ENCODE measurements at regions of chr11 and their contacts with region 1.

Region 1: DNA sequence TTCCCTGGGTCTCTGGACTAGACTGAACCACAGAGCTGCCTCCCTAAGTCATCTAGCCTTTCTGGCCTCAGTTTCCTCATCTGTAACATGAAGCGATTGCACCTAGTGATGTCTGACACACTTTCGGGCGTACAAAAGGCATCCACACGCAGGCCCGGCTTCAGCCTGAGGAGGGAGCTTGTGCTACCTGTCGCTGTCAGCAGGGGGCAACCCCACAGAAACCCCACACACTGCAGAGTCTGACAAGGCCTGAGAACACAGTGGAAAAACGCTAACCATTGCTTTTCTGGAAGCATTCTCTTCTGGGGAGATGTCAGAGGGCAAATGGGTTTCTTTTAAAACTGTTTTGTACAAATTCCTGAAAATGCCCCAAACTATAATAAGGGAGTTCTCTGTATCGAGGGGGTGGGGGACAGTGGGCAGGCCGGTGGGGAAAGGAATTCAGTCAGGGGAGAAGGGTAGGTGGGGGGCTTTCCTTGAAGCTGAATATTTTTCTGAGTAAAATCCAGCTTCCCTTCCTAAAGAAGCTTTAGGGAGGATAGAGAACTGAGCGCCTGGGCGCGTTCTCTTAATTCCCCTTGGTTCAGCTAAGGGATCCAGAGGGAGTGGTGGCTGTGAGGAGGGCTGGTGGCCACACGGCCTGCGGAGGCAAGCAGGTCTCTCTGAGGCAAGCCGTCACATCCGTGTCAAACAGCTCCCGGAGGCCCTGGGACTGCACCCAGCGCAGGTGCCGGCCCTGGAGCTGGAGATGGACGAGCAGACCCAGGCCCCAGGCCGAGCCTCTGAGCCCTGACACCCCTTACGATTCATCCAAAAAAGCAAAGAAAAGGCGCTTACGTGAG is 533 bp downstream of the ELF5 start:
- DNase-seq: peak; percentile 7
- ATAC-seq: peak; percentile 100
- H3K4me3 ChIP-seq: no peak overlapping the region
- H3K27ac ChIP-seq: no peak overlapping the region
- H3K4me1 ChIP-seq: no peaks in the 10 kb centered on the region
- H3K27me3 ChIP-seq: no peaks in the 10 kb centered on the region
- CTCF ChIP-seq: peak; percentile 75 to 93 (median 86)
- EP300 ChIP-seq: no peak
- POLR2A ChIP-seq: no peak
- RAD21 ChIP-seq: peak; percentile 60

Region 2: DNA sequence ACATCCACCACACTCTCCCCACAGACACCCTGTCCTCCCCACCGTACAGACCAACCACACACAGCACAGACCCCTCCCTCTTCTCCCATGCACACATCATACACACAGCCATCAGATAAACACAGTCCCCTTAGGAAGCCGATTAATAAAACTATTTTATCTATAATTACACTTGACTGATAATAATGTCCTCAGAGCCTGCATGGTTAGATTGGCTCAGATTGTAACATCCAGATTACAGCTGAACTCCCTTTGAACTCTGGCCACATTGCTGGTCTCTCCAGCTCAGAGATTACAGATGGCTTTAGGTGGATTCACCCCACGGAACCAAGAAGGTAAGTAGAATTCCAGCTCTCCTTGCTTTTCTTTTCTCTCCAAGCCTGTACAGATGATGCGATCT is 10.0 kb after region 1 on chr11:
- CTCF ChIA-PET with region 1: interaction called, 10 read pairs
- POLR2A ChIA-PET with region 1: no interaction called
- RAD21 ChIA-PET with region 1: interaction called, 4 read pairs
- SMC1A ChIA-PET with region 1: interaction called, 6 read pairs
- in situ Hi-C with region 1: no loop called
- intact Hi-C with region 1: no loop called
- DNase-seq: no peak
- ATAC-seq: no peak
- H3K4me3 ChIP-seq: no peak overlapping the region
- H3K27ac ChIP-seq: no peak overlapping the region
- H3K4me1 ChIP-seq: no peaks in the 10 kb centered on the region
- H3K27me3 ChIP-seq: no peaks in the 10 kb centered on the region; a peak in 1 of 4 replicates
- CTCF ChIP-seq: no peak
- EP300 ChIP-seq: no peak
- POLR2A ChIP-seq: no peak
- RAD21 ChIP-seq: no peak

Region 3: GRCh38 chr11:34890812-34891211 is 377.8 kb after region 1 on chr11:
- CTCF ChIA-PET with region 1: interaction called, 7 read pairs
- POLR2A ChIA-PET with region 1: no interaction called
- RAD21 ChIA-PET with region 1: no interaction called
- SMC1A ChIA-PET with region 1: interaction called, 4 read pairs
- in situ Hi-C with region 1: no loop called
- intact Hi-C with region 1: loop called (anchors 1 kb)
- DNase-seq: no peak
- ATAC-seq: peak; percentile 41; the same call in 1 of the 3 replicates
- H3K4me3 ChIP-seq: no peak overlapping the region
- H3K27ac ChIP-seq: no peak overlapping the region
- H3K4me1 ChIP-seq: no peaks in the 10 kb centered on the region
- H3K27me3 ChIP-seq: no peaks in the 10 kb centered on the region
- CTCF ChIP-seq: peak; percentile 19 to 57 (median 41); a peak in 5 of 6 replicates
- EP300 ChIP-seq: no peak
- POLR2A ChIP-seq: no peak
- RAD21 ChIP-seq: peak; percentile 66

Region 4: DNA sequence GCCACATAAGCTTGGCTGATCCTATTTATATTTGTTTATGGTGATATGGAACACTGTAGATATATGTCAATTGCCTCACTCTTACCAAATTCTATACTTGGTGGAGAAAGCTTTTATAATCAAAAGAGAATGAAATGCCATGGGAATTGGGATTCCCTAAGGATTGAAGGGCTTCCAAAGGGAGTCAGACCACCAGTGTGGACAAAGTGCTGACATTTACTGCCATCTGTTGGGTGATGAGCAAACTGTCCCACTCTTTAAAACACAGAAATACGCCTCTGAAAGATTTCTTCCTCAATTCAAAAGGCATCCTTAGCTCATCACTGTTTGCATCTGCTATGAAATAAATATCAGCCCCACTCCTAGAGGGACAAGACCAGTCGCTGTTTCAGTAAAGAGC is 899.2 kb after region 1 on chr11:
- CTCF ChIA-PET with region 1: no interaction called
- POLR2A ChIA-PET with region 1: no interaction called
- RAD21 ChIA-PET with region 1: no interaction called
- SMC1A ChIA-PET with region 1: no interaction called
- in situ Hi-C with region 1: no loop called
- intact Hi-C with region 1: loop called (anchors 5 kb)
- DNase-seq: no peak
- ATAC-seq: peak; percentile 31; the same call in 1 of the 3 replicates
- H3K4me3 ChIP-seq: no peak overlapping the region
- H3K27ac ChIP-seq: no peak overlapping the region
- H3K4me1 ChIP-seq: no peaks in the 10 kb centered on the region
- H3K27me3 ChIP-seq: peaks cover 2 to 12% of the 10 kb centered on the region in 2 experiments; a peak in 3 of 4 replicates
- CTCF ChIP-seq: peak; percentile 40 to 45 (median 44); a peak in 5 of 6 replicates
- EP300 ChIP-seq: no peak
- POLR2A ChIP-seq: no peak
- RAD21 ChIP-seq: peak; percentile 59